Naive thymus-derived CD4-positive, alpha-beta T cell (primary cell): ENCODE measurements at regions of chr17 and their contacts with region 1.

Region 1: DNA sequence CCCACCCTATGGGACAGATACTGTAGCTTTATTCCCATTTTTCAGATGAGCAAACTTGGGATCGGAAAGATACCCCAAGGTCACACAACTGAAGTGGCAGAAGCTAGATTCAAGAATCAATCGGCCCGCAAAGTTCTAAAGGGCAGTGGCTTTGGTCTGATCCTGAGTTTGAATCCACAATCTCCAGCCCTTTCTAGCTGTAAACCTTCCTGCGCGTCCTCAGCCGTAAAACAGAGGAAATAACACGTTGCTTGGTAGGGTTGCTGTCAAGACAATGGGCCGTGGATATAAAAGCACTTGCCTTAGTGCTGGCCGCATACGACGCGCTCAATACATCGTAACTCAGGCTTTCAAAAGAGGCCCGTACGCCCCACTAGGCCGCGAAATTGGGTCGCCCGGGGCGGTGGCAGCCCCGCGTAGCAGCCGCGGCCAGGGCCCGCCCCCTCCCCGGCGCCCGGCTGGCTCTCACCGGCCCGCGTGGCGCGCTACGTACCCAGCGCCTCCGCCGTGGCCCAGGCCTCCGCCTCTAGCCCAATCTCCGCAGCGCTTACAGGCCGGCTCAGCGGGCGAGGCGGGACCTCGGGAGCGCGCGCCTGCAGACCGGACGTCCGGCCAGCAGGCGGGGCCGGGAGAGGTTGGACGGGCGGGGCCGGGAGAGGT is at the start of gene DCAKD:
- DNase-seq: peak; percentile 78 to 93 (median 84)
- ATAC-seq: peak; percentile 99
- H3K4me3 ChIP-seq: peak within 1 kb of the TSS; percentile 61
- H3K4me3 Mint-ChIP-seq: peak within 1 kb of the TSS; percentile 87 to 96 (median 90)
- H3K27ac ChIP-seq: peak within 1 kb of the TSS; percentile 91
- H3K27ac Mint-ChIP-seq: peak within 1 kb of the TSS; percentile 85 to 98 (median 96)
- H3K4me1 ChIP-seq: peaks cover 19 to 26% of the 10 kb centered on the region in 2 donors
- H3K4me1 Mint-ChIP-seq: peaks cover 11 to 54% (median 41%) of the 10 kb centered on the region in 7 donors
- H3K27me3 ChIP-seq: no peaks in the 10 kb centered on the region
- H3K27me3 Mint-ChIP-seq: no peaks in the 10 kb centered on the region
- total RNA-seq, gene DCAKD: 14.2 to 36.8 (median 29.8) TPM

Region 2: GRCh38 chr17:44199553-44200477 is 851.4 kb before region 1 on chr17 and contains the start of gene ATXN7L3:
- CTCF ChIA-PET with region 1: no interaction called
- POLR2A ChIA-PET with region 1: no interaction called
- intact Hi-C with region 1: loop called in 1 of 2 experiments (anchors 2 kb)
- DNase-seq: peak; percentile 90 to 99 (median 98)
- ATAC-seq: peak; percentile 91
- H3K4me3 ChIP-seq: peak within 1 kb of the TSS; percentile 68
- H3K4me3 Mint-ChIP-seq: peak within 1 kb of the TSS; percentile 90 to 97 (median 92)
- H3K27ac ChIP-seq: peak within 1 kb of the TSS; percentile 93
- H3K27ac Mint-ChIP-seq: peak within 1 kb of the TSS; percentile 91 to 97 (median 96)
- H3K4me1 ChIP-seq: peaks cover 27 to 34% of the 10 kb centered on the region in 2 donors
- H3K4me1 Mint-ChIP-seq: peaks cover 39 to 61% (median 53%) of the 10 kb centered on the region in 7 donors
- H3K27me3 ChIP-seq: no peaks in the 10 kb centered on the region
- H3K27me3 Mint-ChIP-seq: no peaks in the 10 kb centered on the region
- total RNA-seq, gene ATXN7L3: 93.5 to 130 (median 124) TPM

Region 3: DNA sequence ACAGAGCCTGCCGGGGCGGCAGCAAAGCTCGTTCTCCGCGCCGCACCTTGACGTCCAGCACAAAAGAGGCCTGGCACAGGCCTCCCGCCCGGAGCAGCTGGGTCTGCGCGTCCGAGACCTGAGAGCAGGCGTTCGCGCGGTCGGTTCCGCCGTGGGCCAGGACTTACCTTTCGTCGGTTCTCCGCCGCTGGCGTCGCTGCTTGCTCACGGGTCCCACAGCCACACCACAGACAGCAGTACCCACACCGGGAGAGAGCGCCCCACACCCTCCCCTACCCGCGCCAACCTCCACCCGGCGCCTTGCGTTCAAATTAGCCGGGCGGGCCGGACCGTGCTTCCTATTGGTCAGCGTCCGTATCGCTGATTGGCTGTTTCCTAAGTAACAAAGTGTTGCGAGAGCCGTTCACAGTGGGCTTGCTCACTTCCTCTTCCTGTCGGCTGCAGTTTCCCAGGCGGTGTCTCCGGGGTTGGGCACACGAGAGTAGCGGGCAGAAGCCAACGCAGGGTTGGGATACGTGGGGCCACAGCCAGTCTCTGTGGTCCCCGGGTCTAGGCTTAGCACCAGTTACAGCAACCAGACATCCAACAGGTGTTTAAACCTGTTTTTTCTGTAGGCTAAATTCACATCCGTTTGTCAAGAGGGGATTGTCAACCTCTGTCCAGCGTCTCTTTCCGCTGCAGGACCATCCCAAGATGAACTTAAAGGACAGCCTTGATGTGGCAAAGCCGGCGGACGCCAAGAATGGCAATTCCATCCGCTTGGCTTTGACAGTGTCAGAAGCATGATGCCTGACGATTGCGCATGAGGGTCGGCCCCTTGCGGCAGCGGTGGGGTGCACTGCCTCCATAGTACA is 103.5 kb before region 1 on chr17 and contains the start of gene KIF18B:
- CTCF ChIA-PET with region 1: no interaction called
- POLR2A ChIA-PET with region 1: interaction called, 3 read pairs
- intact Hi-C with region 1: loop called (anchors 1 to 2 kb)
- DNase-seq: peak; percentile 73 to 91 (median 86)
- ATAC-seq: peak; percentile 99
- H3K4me3 ChIP-seq: peak within 1 kb of the TSS; percentile 83
- H3K4me3 Mint-ChIP-seq: peak within 1 kb of the TSS; percentile 85 to 98 (median 93)
- H3K27ac ChIP-seq: peak within 1 kb of the TSS; percentile 69
- H3K27ac Mint-ChIP-seq: peak within 1 kb of the TSS; percentile 86 to 98 (median 93)
- H3K4me1 ChIP-seq: peaks cover 5 to 6% of the 10 kb centered on the region in 2 donors
- H3K4me1 Mint-ChIP-seq: peaks cover 0 to 40% (median 5%) of the 10 kb centered on the region in 7 donors
- H3K27me3 ChIP-seq: no peaks in the 10 kb centered on the region
- H3K27me3 Mint-ChIP-seq: peaks cover 0 to 7% (median 0%) of the 10 kb centered on the region in 5 donors
- total RNA-seq, gene KIF18B: 0.17 to 57.2 TPM in 2 of 5 experiments, not detected in the others

Region 4: GRCh38 chr17:45021607-45022287 is 29.4 kb before region 1 on chr17:
- CTCF ChIA-PET with region 1: interaction called, 5 read pairs
- POLR2A ChIA-PET with region 1: no interaction called
- intact Hi-C with region 1: loop called in 1 of 2 experiments (anchors 2 kb)
- DNase-seq: peak; percentile 34 to 81 (median 60)
- ATAC-seq: peak; percentile 91
- H3K4me3 ChIP-seq: peak overlapping the region; percentile 47
- H3K4me3 Mint-ChIP-seq: peak overlapping the region; percentile 35 to 82 (median 67)
- H3K27ac ChIP-seq: peak overlapping the region; percentile 14
- H3K27ac Mint-ChIP-seq: peak overlapping the region in 2 of 9 donors; percentile 5 to 74
- H3K4me1 ChIP-seq: peaks cover 15 to 17% of the 10 kb centered on the region in 2 donors
- H3K4me1 Mint-ChIP-seq: peaks cover 6 to 26% (median 18%) of the 10 kb centered on the region in 7 donors
- H3K27me3 ChIP-seq: peaks cover 0 to 11% of the 10 kb centered on the region in 2 donors
- H3K27me3 Mint-ChIP-seq: peaks cover 32 to 35% (median 34%) of the 10 kb centered on the region in 5 donors

Region 5: GRCh38 chr17:45161019-45161825 is 110.0 kb after region 1 on chr17:
- CTCF ChIA-PET with region 1: no interaction called
- POLR2A ChIA-PET with region 1: interaction called, 3 read pairs
- intact Hi-C with region 1: loop called (anchors 1 kb)
- DNase-seq: peak; percentile 89 to 100 (median 99)
- ATAC-seq: peak; percentile 93
- H3K4me3 ChIP-seq: peak overlapping the region; percentile 95
- H3K4me3 Mint-ChIP-seq: peak overlapping the region; percentile 88 to 100 (median 96)
- H3K27ac ChIP-seq: peak overlapping the region; percentile 98
- H3K27ac Mint-ChIP-seq: peak overlapping the region; percentile 97 to 100 (median 98)
- H3K4me1 ChIP-seq: peaks cover 15 to 27% of the 10 kb centered on the region in 2 donors
- H3K4me1 Mint-ChIP-seq: peaks cover 29 to 48% (median 43%) of the 10 kb centered on the region in 7 donors
- H3K27me3 ChIP-seq: no peaks in the 10 kb centered on the region
- H3K27me3 Mint-ChIP-seq: no peaks in the 10 kb centered on the region